A673 (cell line): ENCODE measurements at regions of chr19 and their contacts with region 1.

Region 1: DNA sequence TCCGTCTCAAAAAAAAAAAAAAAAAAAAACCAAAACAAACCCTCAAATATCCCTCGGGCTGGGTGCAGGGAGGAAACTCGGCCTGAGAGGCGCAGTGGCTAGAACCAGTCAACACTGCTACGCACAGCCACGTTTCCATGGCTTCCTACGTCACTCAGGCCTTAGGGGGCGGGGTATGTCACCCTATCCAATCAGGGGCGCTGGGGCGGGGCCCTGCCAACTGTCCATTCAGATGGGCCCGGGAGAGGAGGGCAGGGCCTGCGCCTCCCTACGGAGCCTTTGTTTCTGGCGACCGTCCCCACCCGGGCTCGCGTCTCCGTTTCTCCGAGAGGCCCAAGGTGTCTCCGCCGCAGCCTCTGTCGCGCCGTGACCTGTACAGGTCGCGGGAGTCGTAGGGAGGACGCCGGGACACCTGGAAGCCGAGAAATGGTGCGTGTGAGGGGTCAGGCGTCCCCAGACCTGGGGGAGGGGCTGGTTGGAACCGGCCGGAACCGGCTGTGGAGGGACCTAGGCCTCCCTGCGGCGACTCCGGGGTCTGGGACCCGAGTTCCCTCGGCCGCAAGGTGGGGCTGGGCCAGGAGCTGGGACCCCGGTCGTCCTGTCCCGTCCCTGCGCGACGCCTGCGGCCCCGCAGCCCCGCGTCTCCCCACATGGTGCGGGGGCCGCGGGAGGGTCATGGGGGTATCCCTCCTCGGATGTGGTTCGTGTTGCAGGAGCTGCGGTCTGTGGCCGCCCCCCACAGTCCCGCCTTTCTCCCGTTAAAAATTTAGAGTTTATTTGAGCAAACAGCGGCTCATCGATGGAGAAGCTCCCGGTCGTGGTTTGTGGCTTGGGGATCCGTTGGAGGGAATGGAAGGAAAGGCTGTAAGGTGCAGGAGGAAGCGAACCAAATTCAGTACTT is at the start of gene ZNF627:
- DNase-seq: peak; percentile 99
- H3K4me3 ChIP-seq: peak within 1 kb of the TSS; percentile 97
- H3K27ac ChIP-seq: peak within 1 kb of the TSS; percentile 97
- H3K4me1 ChIP-seq: peaks cover 2% of the 10 kb centered on the region
- H3K27me3 ChIP-seq: no peaks in the 10 kb centered on the region
- CTCF ChIP-seq: no peak
- total RNA-seq, gene ZNF627: 13.9 and 14.0 TPM in 2 replicates

Region 2: DNA sequence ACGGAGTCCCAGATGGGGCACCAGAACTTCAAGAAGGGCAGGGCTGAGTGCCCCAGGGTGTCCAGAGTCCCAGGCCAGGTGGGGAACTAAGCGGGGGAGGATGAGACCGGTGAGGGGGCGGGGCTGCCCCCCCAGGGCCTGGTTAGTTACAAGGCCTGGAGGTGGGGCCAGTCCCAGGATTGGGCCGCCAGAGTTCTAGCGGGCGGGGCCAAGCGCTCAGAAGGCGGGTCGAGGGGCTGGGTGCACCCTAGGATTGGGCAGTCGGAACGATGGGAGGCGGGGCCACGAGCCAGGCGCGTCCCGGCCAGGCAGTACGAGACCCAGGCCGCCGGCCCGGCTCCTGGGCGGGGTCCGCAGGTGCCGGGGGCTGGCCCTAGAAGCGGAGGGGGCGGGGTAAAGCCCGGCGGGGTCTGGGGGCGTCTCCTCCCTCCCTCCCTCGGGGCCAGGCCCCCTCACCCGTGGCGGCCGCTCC is 92.4 kb before region 1 on chr19:
- CTCF ChIA-PET with region 1: no interaction called
- POLR2A ChIA-PET with region 1: no interaction called
- intact Hi-C with region 1: no loop called
- DNase-seq: peak; percentile 96
- H3K4me3 ChIP-seq: peak overlapping the region; percentile 85
- H3K27ac ChIP-seq: peak overlapping the region; percentile 94
- H3K4me1 ChIP-seq: peaks cover 7% of the 10 kb centered on the region
- H3K27me3 ChIP-seq: no peaks in the 10 kb centered on the region
- CTCF ChIP-seq: no peak

Region 3: DNA sequence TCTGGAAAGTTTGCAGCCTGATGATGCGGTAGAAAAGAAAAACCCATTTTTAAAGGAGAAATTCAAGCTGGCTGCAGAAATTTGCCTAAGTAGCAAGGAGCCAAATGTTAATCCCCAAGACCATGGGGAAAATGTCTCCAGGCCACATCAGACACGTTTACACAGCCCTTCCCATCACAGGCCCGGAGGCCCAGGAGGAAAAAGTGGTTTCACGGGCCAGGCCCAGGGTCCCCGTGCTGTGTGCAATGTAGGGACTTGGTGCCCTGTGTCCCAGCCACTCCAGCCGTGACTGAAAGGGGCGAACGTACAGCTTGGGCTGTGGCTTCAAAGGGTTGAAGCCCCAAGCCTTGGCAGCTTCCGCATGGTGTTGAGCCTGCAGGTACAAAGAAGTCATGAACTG is 35.8 kb after region 1 on chr19:
- CTCF ChIA-PET with region 1: no interaction called
- POLR2A ChIA-PET with region 1: no interaction called
- intact Hi-C with region 1: no loop called
- DNase-seq: no peak
- H3K4me3 ChIP-seq: no peak overlapping the region
- H3K27ac ChIP-seq: no peak overlapping the region
- H3K4me1 ChIP-seq: no peaks in the 10 kb centered on the region
- H3K27me3 ChIP-seq: no peaks in the 10 kb centered on the region
- CTCF ChIP-seq: no peak

Region 4: GRCh38 chr19:12333162-12334159 is 736.0 kb after region 1 on chr19 and contains the start of gene ZNF563:
- CTCF ChIA-PET with region 1: no interaction called
- POLR2A ChIA-PET with region 1: interaction called, 11 read pairs
- intact Hi-C with region 1: no loop called
- DNase-seq: peak; percentile 93
- H3K4me3 ChIP-seq: peak within 1 kb of the TSS; percentile 61
- H3K27ac ChIP-seq: no peak within 1 kb of the TSS
- H3K4me1 ChIP-seq: no peaks in the 10 kb centered on the region
- H3K27me3 ChIP-seq: peaks cover 5% of the 10 kb centered on the region
- CTCF ChIP-seq: no peak
- total RNA-seq, gene ZNF563: 0.15 and 0.26 TPM in 2 replicates